Posterior vena cava (tissue), 2 donors: ENCODE measurements at regions of chr1 and their contacts with region 1.

Region 1: GRCh38 chr1:74468982-74469603 is 43.3 kb downstream of the LRRC53 start:
- DNase-seq: no peak

Region 2: GRCh38 chr1:74197657-74198552 is 271.2 kb before region 1 on chr1 and contains the starts of genes FPGT and LRRIQ3:
- intact Hi-C with region 1: loop called in 1 of 2 experiments (anchors 10 kb)
- DNase-seq: peak; percentile 99
- total RNA-seq, gene FPGT: 16.6 to 22.6 TPM
- total RNA-seq, gene LRRIQ3: 0.37 to 0.71 TPM

Region 3: DNA sequence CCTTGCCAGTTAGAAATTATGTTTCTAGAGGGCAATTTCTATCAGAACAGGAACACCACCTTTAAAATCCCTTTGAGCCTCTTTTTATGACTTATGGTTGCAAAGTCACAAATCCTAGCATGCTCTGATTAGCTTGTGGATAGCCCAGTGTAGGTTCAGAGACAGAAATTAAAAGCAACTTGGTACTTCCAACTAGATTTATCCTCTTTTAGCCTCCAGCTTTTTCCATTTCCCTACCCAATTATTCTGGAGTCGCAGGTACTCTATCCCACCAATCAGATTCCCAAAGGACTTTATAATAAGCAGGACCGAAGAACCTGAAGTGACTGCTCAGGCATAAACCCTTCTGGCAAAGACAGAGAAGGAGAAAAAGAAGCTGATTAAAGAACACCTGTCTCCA is 76.7 kb after region 1 on chr1:
- intact Hi-C with region 1: no loop called
- DNase-seq: no peak

Region 4: GRCh38 chr1:75067975-75068374 is 598.9 kb after region 1 on chr1:
- intact Hi-C with region 1: no loop called
- DNase-seq: no peak